ENCODE measurements at regions of chr21 and their contacts with region 1.

Region 1: DNA sequence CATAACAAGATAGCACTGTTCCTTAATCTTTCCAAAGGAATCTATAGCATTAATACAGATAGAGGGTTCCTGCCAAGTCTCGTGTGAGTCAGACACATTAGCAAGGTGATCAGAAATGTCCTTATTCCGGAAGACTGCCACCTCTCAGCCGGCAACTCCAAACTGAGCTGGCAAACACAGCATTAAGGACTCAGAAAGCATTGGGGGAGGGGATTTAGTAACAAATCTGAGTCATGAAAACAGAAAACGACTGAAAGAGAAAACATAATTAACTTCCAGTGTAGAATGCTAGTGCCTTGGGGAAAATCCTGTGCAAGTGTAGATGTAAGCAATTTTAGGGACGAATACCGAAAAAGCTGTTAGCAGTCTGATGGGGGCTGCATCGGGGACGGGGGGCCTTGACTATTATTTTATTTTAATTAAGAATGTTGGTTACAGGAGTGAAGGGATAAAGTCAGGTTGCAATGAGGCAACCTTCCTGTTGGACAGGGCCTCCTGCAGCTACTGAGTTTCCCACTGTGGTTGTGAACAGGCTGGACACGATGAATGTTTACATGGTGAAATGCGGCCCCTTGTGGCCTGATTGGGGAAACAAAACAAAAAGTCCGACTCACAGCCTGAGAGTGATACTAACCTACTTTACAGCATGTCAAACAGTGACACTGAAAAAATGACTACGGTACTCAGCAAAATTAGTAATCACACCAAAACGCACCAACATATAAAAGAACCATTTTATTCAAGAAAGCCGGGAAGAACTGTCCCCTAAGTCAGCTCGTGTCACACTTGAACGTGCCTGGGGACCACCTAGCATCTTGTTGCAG is 20.7 kb downstream of the MIS18A start:
- DNase-seq: peak; percentile 85
- ATAC-seq: peak; percentile 85
- H3K4me3 ChIP-seq: no peak overlapping the region
- H3K27ac ChIP-seq: no peak overlapping the region
- H3K4me1 ChIP-seq: peaks cover 8% of the 10 kb centered on the region; the same call in 1 of the 2 replicates
- H3K27me3 ChIP-seq: no peaks in the 10 kb centered on the region
- CTCF ChIP-seq: peak; percentile 93
- POLR2A ChIP-seq: no peak
- RAD21 ChIP-seq: peak; percentile 96

Region 2: GRCh38 chr21:31731802-31732596 is 526.2 kb before region 1 on chr21 and contains the start of gene SCAF4:
- CTCF ChIA-PET with region 1: no interaction called
- POLR2A ChIA-PET with region 1: no interaction called
- dilution Hi-C with region 1: no loop called
- in situ Hi-C with region 1: no loop called
- intact Hi-C with region 1: loop called (anchors 5 kb)
- DNase-seq: peak; percentile 87
- ATAC-seq: peak; percentile 90
- H3K4me3 ChIP-seq: peak within 1 kb of the TSS; percentile 92
- H3K27ac ChIP-seq: peak within 1 kb of the TSS; percentile 95
- H3K4me1 ChIP-seq: peaks cover 20% of the 10 kb centered on the region
- H3K27me3 ChIP-seq: no peaks in the 10 kb centered on the region
- CTCF ChIP-seq: no peak
- POLR2A ChIP-seq: peak; percentile 93
- RAD21 ChIP-seq: no peak
- total RNA-seq, gene SCAF4: 2.7 and 5.0 TPM in 2 replicates

Region 3: DNA sequence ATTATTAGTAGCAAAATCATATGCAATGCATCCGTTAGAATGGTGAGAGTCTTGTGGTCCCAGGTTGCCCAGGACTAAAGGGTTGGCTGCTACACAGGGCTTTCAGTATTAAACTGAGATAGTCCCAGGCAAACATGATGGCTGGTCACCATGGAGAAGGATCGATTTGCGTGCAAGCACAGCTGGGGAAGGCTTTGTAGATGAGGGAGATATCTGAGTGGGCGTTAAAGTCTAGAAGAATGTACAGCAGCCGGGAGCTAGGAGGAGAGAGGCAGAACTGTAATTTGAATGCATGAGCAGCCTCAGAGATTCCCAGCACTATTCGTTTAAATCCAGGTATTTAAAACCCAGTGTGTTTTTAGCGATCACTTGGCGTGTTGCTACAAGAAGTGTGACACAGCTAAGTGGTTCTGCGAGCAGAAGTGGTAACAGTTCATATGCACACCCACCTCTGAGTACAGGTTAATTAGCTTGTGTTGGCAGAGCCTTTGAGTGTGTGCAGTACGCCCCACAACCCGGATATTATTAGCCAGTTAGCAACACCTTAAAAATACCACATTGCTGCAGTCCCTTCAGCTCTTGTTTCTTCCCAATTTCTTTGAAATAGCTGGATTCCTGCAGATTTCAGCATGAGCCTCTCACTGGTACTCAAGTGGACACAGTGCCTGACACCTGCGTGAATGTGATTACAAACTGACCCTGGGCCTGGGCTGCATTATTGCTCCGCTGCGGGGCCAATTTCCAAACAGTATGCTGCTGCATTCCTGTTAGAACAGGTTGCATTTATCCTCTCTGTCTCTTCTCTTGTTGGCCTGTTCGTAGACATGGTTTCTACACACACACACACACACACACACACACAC is 459.1 kb before region 1 on chr21:
- CTCF ChIA-PET with region 1: no interaction called
- POLR2A ChIA-PET with region 1: no interaction called
- dilution Hi-C with region 1: no loop called
- in situ Hi-C with region 1: loop called (anchors 5 kb)
- intact Hi-C with region 1: no loop called
- DNase-seq: peak; percentile 22
- ATAC-seq: no peak
- H3K4me3 ChIP-seq: no peak overlapping the region
- H3K27ac ChIP-seq: no peak overlapping the region
- H3K4me1 ChIP-seq: no peaks in the 10 kb centered on the region
- H3K27me3 ChIP-seq: peaks cover 4% of the 10 kb centered on the region; the same call in 1 of the 2 replicates
- CTCF ChIP-seq: no peak
- POLR2A ChIP-seq: no peak
- RAD21 ChIP-seq: no peak

Region 4: DNA sequence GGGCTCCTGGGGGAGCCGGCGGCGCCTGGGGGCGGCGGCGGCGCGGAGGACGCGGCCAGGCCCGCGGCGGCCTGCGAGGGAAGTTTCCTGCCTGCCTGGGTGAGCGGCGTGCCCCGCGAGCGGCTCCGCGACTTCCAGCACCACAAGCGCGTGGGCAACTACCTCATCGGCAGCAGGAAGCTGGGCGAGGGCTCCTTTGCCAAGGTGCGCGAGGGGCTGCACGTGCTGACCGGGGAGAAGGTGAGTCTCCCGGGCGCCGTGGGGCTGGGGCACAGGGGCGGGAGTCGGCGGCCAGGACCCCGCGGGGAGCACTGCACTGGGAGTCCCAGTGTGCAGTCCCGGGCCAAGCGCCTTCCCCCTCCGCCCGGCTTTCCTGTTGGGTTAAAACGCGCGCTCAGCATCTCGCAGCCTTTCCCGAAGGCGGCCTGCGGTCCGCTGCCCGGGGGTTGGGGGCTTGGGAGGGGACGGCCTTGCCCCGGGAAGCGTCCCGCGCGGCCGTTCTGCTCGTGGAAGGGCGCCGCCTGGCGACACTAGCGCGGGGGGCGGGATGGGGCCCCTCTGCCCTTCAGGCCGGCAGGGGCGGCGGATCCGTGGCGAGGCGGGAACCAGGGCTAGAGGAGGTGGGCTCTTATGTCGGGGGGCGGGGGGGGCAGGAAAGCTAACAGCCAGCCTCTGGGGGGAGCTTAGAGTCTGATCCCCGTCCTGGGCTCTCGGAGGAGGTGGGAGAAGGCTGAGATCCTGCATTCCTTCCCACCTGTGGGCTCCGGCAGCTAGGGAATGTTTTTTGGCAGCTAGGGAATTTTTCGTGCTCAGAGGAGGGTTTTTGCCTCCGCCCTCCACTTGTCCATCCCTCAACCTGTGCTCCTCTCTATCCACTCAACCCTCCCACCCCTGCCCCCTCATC is 384.2 kb before region 1 on chr21:
- CTCF ChIA-PET with region 1: interaction called, 6 read pairs
- POLR2A ChIA-PET with region 1: no interaction called
- dilution Hi-C with region 1: no loop called
- in situ Hi-C with region 1: loop called (anchors 5 kb)
- intact Hi-C with region 1: loop called (anchors 1 kb)
- DNase-seq: peak; percentile 33
- ATAC-seq: peak; percentile 53
- H3K4me3 ChIP-seq: peak overlapping the region; percentile 89
- H3K27ac ChIP-seq: peak overlapping the region; percentile 75
- H3K4me1 ChIP-seq: peaks cover 4% of the 10 kb centered on the region; the same call in 1 of the 2 replicates
- H3K27me3 ChIP-seq: peaks cover 10% of the 10 kb centered on the region
- CTCF ChIP-seq: peak; percentile 54
- POLR2A ChIP-seq: no peak
- RAD21 ChIP-seq: peak; percentile 36

Region 5: DNA sequence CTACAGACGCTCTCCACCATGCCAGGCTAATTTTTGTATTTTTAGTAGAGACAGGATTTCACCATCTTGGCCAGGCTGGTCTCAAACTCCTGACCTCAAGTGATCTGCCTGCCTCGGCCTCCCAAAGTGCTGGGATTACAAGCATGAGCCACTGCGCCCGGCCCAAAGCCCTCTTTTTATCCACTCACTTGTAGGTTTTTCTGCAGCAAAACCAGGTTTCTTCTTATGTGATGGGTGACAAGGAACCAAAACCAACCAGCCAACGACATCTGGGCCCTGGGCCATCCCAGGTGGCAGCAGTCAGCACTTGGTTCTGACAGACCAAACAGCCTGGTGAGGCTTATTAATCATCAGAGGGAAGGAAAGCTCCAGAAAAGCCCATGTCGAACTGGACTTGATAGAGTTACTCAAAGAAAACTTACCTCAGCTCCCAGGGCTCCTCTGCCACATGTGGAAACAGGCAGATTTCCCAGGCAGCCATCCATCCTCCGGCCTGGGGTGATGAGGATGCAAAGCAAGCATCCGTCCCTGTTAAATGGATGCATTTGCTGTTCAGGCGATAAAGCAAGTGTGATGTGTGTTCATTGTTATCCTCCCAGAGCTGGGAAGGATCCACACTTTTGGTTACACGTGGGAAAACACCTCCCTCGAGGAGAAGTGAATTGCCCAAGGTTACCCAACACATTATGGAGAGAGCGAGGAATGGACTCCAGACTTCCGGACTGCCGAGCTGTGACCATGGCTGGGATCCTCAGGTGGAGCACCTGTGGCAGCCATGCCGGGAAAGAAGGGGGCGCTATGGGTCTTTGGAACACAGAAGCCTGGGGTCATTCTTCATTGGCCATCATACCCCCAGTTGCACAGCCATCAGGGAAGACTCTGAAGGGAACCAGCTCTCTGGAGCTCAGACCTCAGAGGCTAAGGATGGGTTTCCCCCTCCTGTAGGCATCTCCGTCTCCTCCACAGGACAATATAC is 266.5 kb before region 1 on chr21:
- CTCF ChIA-PET with region 1: no interaction called
- POLR2A ChIA-PET with region 1: no interaction called
- dilution Hi-C with region 1: no loop called
- in situ Hi-C with region 1: no loop called
- intact Hi-C with region 1: loop called (anchors 10 kb)
- DNase-seq: no peak
- ATAC-seq: no peak
- H3K4me3 ChIP-seq: no peak overlapping the region
- H3K27ac ChIP-seq: no peak overlapping the region
- H3K4me1 ChIP-seq: no peaks in the 10 kb centered on the region; the same call in 1 of the 2 replicates
- H3K27me3 ChIP-seq: no peaks in the 10 kb centered on the region
- CTCF ChIP-seq: no peak
- POLR2A ChIP-seq: no peak
- RAD21 ChIP-seq: no peak

Region 6: GRCh38 chr21:32520875-32521735 is 262.9 kb after region 1 on chr21:
- CTCF ChIA-PET with region 1: no interaction called
- POLR2A ChIA-PET with region 1: no interaction called
- dilution Hi-C with region 1: no loop called
- in situ Hi-C with region 1: no loop called
- intact Hi-C with region 1: no loop called
- DNase-seq: peak; percentile 97
- ATAC-seq: peak; percentile 71
- H3K4me3 ChIP-seq: no peak overlapping the region
- H3K27ac ChIP-seq: peak overlapping the region; percentile 73
- H3K4me1 ChIP-seq: peaks cover 21% of the 10 kb centered on the region
- H3K27me3 ChIP-seq: no peaks in the 10 kb centered on the region
- CTCF ChIP-seq: no peak
- POLR2A ChIP-seq: peak; percentile 61
- RAD21 ChIP-seq: no peak